AG04449 (cell line): ENCODE measurements at regions of chr4 and their contacts with region 1.

Region 1: GRCh38 chr4:152500800-152501434 is 35.0 kb downstream of the FBXW7 start:
- DNase-seq: peak; percentile 79
- H3K4me3 ChIP-seq: no peak overlapping the region
- CTCF ChIP-seq: peak; percentile 51

Region 2: GRCh38 chr4:152310262-152310661 is 190.7 kb before region 1 on chr4:
- CTCF ChIA-PET with region 1: no interaction called
- POLR2A ChIA-PET with region 1: no interaction called
- DNase-seq: peak; percentile 31
- H3K4me3 ChIP-seq: no peak overlapping the region
- CTCF ChIP-seq: no peak

Region 3: DNA sequence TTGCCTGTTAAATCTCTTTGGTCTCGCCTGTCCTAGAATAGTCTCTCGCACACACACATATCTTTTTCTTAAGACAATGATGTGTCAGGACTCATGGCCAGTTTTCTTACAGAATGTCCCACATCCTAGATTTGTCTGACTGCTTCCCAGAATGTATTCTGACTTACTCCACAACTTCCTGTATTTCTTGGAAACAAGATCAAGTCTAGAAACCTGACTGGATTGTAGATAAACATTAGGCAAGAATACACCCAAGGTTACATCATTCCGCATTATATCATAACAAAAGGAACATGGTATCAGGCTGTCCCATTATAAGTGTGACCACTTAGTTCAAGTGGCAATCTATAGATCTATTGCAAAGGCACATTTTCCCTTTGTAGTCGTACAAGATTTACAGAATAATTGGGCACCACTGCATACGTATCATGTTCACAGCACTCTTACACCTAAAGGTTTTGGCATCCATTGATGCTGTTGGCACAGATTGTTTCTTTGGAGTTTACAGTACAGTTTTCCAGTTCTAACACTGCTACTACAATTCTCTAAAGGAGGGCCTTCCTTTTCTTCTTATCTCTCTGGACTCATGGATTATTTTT is 21.4 kb before region 1 on chr4:
- CTCF ChIA-PET with region 1: interaction called, 14 read pairs
- POLR2A ChIA-PET with region 1: no interaction called
- DNase-seq: no peak
- H3K4me3 ChIP-seq: no peak overlapping the region
- CTCF ChIP-seq: no peak

Region 4: DNA sequence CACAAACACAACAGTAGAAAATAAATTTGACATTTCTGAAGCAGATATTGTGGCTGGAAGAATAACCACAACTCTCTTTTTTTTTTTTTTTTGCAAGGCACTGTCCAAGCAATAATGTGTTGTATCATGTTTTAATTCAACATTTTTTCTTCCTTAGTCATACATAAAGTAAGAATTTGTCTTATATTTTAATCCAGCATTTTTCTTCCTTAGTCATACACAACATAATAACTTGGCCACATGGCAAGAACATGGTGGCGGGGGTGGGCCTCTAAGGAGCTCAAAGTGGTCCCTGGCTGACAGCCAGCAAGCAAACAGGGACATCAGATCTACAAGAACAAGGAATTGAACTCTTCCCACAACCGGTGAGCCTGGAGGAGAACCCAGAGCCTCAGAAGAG is 14.8 kb after region 1 on chr4:
- CTCF ChIA-PET with region 1: interaction called, 50 read pairs
- POLR2A ChIA-PET with region 1: no interaction called
- DNase-seq: peak; percentile 26
- H3K4me3 ChIP-seq: no peak overlapping the region
- CTCF ChIP-seq: no peak

Region 5: DNA sequence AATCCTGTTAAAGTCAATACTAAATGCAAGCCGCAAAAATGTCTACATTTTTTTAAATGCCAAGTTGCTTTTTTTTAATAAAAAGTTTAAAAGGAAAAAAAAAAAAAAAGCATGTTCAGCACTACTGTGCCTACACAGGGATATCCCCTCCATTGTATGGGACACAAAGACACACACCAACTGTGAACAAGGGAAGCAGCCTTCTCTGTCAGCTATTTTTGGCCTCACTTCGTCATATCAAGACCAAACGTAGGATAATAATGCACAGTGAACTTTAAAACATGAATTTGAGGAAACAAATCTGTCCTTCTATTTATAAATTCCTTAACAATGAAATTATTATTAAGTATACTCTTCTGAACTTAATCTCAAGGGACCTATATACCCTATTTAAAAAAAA is 30.6 kb after region 1 on chr4:
- CTCF ChIA-PET with region 1: interaction called, 24 read pairs
- POLR2A ChIA-PET with region 1: no interaction called
- DNase-seq: no peak
- H3K4me3 ChIP-seq: no peak overlapping the region
- CTCF ChIP-seq: no peak

Region 6: DNA sequence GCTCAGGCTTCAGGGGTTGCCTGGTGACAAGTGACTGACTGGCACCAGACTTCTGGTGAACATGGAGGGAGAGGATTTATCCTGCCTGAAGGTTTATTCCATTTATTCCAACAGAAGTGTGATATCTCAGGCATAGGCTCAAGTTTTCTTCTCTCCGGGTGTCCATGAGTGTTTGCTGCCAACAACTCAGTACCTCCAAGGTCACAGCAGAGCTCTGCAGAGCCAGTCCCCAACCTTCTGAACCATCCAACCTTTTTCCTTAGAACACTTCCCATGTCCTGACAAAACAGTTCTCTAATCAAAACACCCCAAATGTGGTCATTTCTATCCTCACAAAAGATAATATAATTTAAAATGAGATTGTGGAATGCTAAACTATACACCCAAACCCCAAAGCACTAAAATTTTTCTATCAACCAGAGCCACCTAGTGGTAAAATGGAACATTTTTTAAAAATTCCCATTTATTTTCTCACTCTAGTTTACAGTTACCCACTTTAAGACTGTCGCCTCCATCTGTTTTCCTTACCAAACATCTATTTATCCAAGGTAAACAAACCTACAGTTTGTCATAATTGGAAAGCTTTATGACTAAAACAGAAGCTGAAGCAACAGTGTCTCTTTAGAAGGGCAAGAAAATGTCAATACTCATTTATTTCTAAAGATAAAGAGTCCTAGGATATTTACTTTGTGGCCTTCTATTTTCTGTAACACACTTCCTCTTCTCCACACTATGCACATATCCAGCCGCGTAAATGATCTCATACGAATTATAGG is 139.3 kb after region 1 on chr4:
- CTCF ChIA-PET with region 1: interaction called, 348 read pairs
- POLR2A ChIA-PET with region 1: no interaction called
- DNase-seq: no peak
- H3K4me3 ChIP-seq: no peak overlapping the region
- CTCF ChIP-seq: no peak

Region 7: DNA sequence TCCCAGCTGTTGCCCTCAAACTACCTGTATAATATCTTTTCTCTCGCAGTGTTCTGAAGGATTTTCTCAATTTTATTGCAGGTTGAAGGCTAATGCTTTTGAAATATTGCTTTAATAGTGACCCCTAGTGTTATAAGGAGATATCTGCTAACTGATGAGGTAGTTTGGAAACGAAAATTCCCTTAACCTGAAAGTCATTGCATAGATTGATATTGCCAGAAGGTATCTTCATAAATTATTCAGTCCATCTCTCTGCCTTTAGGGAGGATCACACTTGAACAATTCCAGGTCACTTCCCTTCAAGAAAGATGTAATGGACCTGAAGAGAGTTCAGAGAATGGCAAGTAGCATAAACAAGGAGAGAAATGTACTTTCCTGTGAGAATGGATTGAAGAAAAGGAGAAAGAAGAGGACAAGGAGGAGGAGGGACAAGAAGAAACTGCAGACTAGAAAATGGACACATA is 234.5 kb after region 1 on chr4:
- CTCF ChIA-PET with region 1: interaction called, 48 read pairs
- POLR2A ChIA-PET with region 1: no interaction called
- DNase-seq: no peak
- H3K4me3 ChIP-seq: no peak overlapping the region
- CTCF ChIP-seq: peak; percentile 38